Activated T-helper 2 cell treated with anti-CD3 and anti-CD28 coated beads, Interferon-gamma antibody, Interleukin-2, Interleukin-4, amounts not matched to agents 10 μg/mL and 5 μg/mL and 100 μg/mL, durations not matched to agents 14 hours and 24 hours and 36 hours (primary cell): ENCODE measurements at regions of chr13 and their contacts with region 1.

Region 1: GRCh38 chr13:79435561-79435990 is 29.5 kb upstream of the RBM26 start:
- DNase-seq: no peak
- H3K4me3 Mint-ChIP-seq: no peak overlapping the region
- H3K27ac Mint-ChIP-seq: no peak overlapping the region
- H3K4me1 Mint-ChIP-seq: peaks cover 24% of the 10 kb centered on the region
- H3K27me3 Mint-ChIP-seq: no peaks in the 10 kb centered on the region

Region 2: GRCh38 chr13:79312340-79312855 is 123.2 kb before region 1 on chr13:
- intact Hi-C with region 1: no loop called
- DNase-seq: no peak
- H3K4me3 Mint-ChIP-seq: no peak overlapping the region
- H3K27ac Mint-ChIP-seq: no peak overlapping the region
- H3K4me1 Mint-ChIP-seq: peaks cover 1% of the 10 kb centered on the region
- H3K27me3 Mint-ChIP-seq: peaks cover 1% of the 10 kb centered on the region

Region 3: GRCh38 chr13:79445968-79446645 is 10.5 kb after region 1 on chr13:
- intact Hi-C with region 1: loop called (anchors 1 kb)
- DNase-seq: no peak
- H3K4me3 Mint-ChIP-seq: peak overlapping the region; percentile 4
- H3K27ac Mint-ChIP-seq: peak overlapping the region; percentile 54
- H3K4me1 Mint-ChIP-seq: peaks cover 56% of the 10 kb centered on the region
- H3K27me3 Mint-ChIP-seq: no peaks in the 10 kb centered on the region